Activated CD4-positive, alpha-beta memory T cell treated with anti-CD3 and anti-CD28 coated beads, Interleukin-2, amount 10 ng/mL, durations not matched to agents 7 days and 5 days (primary cell): ENCODE measurements at regions of chr17 and their contacts with region 1.

Region 1: GRCh38 chr17:48457080-48457836 is 27.2 kb upstream of the SKAP1 start:
- DNase-seq: peak; percentile 82
- H3K4me3 Mint-ChIP-seq: peak overlapping the region; percentile 43
- H3K27ac Mint-ChIP-seq: peak overlapping the region; percentile 24
- H3K4me1 Mint-ChIP-seq: peaks cover 74% of the 10 kb centered on the region
- H3K27me3 Mint-ChIP-seq: peaks cover 2% of the 10 kb centered on the region

Region 2: GRCh38 chr17:48351831-48352332 is 105.4 kb before region 1 on chr17:
- CTCF ChIA-PET with region 1: interaction called, 10 read pairs
- POLR2A ChIA-PET with region 1: interaction called, 5 read pairs
- DNase-seq: no peak
- H3K4me3 Mint-ChIP-seq: no peak overlapping the region
- H3K27ac Mint-ChIP-seq: no peak overlapping the region
- H3K4me1 Mint-ChIP-seq: peaks cover 11% of the 10 kb centered on the region
- H3K27me3 Mint-ChIP-seq: no peaks in the 10 kb centered on the region

Region 3: DNA sequence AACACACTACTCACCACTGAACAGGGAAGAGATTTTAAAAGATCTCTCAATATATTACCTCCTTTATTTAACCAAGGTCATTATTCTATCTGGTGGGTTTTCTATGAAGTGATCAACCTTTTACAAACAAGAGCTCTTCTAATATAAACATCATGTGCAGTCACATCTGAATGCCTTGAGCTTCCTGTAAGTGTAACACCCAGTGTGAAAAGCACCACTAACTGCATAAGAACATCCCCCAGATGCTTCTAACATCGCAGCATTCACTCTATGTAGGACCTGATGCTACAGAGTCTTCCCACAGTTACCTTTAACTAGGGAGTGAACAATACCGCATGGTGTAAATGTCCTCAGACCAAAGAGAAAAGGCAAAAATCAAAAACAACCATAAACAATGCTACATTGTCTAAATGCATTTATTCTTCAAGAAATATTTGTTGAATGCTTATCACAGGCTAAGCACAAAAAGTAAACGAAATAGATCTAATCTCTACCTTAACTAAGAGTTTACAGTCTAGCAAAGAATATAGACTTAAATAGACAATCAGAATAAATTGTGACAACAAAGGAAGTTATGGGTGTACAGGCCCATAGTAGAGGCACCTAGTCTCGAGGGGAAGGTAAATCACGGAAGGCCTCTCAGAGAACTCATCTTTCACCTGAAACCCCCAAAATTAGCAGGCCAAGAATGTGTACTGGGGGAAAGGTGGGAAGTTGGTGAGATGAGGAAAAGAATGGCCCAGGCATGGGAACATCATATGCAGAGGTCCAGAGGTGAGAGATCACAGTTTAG is 43.4 kb before region 1 on chr17:
- CTCF ChIA-PET with region 1: interaction called, 10 read pairs
- POLR2A ChIA-PET with region 1: interaction called, 22 read pairs
- DNase-seq: no peak
- H3K4me3 Mint-ChIP-seq: no peak overlapping the region
- H3K27ac Mint-ChIP-seq: peak overlapping the region; percentile 64
- H3K4me1 Mint-ChIP-seq: peaks cover 69% of the 10 kb centered on the region
- H3K27me3 Mint-ChIP-seq: no peaks in the 10 kb centered on the region

Region 4: GRCh38 chr17:48429638-48430586 is 27.3 kb before region 1 on chr17 and contains the start of gene SKAP1:
- CTCF ChIA-PET with region 1: interaction called, 11 read pairs
- POLR2A ChIA-PET with region 1: interaction called, 34 read pairs
- DNase-seq: peak; percentile 72
- H3K4me3 Mint-ChIP-seq: peak within 1 kb of the TSS; percentile 89
- H3K27ac Mint-ChIP-seq: peak within 1 kb of the TSS; percentile 92
- H3K4me1 Mint-ChIP-seq: peaks cover 48% of the 10 kb centered on the region
- H3K27me3 Mint-ChIP-seq: no peaks in the 10 kb centered on the region
- total RNA-seq, gene SKAP1: 132 to 133 TPM

Region 5: GRCh38 chr17:48441231-48441711 is 16.0 kb before region 1 on chr17:
- CTCF ChIA-PET with region 1: interaction called, 18 read pairs
- POLR2A ChIA-PET with region 1: interaction called, 138 read pairs
- DNase-seq: peak; percentile 61
- H3K4me3 Mint-ChIP-seq: peak overlapping the region; percentile 54
- H3K27ac Mint-ChIP-seq: peak overlapping the region; percentile 97
- H3K4me1 Mint-ChIP-seq: peaks cover 93% of the 10 kb centered on the region
- H3K27me3 Mint-ChIP-seq: no peaks in the 10 kb centered on the region

Region 6: GRCh38 chr17:48492401-48493298 is 35.4 kb after region 1 on chr17:
- CTCF ChIA-PET with region 1: interaction called, 16 read pairs
- POLR2A ChIA-PET with region 1: interaction called, 7 read pairs
- DNase-seq: peak; percentile 75
- H3K4me3 Mint-ChIP-seq: peak overlapping the region; percentile 60
- H3K27ac Mint-ChIP-seq: peak overlapping the region; percentile 50
- H3K4me1 Mint-ChIP-seq: peaks cover 47% of the 10 kb centered on the region
- H3K27me3 Mint-ChIP-seq: peaks cover 17% of the 10 kb centered on the region